Right ventricle myocardium superior (tissue), 1 donor: ENCODE measurements at regions of chr3 and their contacts with region 1.

Region 1: DNA sequence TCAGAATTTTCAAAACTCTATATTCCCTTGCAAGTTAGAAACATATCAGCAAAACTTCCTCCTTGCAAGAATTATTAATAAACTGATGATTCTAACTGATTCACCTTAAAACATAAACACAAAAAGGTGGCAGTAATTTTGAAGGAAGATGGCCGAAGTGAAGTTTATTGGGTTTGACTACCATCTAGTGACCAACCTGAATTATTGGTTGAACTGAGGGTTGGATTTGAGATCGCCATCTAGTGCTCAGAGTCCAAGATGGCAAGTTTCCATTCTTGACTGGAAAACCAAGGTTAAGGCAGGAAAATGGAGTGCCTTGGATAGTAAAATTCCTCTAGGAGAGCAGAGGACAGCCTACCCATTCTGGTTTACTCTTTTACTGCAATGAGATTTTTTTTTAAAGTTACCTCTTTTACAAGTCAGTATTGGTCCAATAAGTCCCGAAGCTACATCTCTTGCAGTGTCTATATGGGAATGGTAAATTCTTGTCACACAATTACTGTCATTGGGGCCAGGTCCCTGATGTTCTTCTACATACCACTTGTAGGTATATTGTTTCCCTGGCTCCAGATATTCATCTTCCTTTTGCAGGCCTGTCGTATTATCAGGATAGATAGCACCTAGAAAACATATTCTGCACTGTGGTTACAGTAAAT is 51.6 kb upstream of the CP start:
- DNase-seq: no peak
- ATAC-seq: peak; percentile 93

Region 2: DNA sequence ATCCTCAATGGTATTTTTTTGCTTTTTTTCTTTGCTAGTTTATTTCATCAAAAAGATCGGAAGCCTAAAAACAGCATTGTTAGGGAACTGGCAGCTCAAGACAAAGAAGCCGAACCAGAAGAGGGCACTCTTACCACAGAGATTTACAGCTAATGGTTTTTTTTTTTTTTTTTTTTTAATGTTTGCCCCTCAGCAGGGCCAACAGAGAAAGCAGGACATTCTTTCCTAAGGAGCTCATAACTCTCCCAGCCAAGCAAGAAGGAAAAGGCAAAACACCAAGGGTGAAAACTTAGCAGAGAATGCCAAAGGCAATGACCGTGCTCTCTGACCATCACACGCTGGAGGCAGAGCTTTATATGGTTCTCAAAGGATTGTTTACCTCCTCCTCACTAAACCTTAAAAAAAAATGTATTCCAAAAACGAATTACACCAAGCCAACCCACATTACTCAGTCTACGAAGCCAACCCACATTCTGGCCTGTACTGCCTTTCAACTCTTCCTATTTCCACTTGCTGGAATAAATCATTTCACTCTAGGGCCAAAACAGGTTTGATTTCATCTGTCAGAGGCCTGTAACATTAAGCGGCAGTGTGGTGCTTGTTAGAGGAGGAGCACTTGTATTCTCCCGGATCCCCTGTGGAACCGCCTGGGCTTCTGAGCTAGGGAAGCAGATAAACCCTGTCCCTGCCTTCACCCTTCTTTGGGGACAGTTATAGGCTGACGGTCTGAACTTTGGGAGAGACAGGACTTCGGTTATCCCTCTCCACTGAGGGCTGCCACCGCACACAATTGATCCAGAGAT is 317.5 kb before region 1 on chr3:
- intact Hi-C with region 1: loop called (anchors 2 kb)
- DNase-seq: no peak
- ATAC-seq: peak; percentile 92

Region 3: DNA sequence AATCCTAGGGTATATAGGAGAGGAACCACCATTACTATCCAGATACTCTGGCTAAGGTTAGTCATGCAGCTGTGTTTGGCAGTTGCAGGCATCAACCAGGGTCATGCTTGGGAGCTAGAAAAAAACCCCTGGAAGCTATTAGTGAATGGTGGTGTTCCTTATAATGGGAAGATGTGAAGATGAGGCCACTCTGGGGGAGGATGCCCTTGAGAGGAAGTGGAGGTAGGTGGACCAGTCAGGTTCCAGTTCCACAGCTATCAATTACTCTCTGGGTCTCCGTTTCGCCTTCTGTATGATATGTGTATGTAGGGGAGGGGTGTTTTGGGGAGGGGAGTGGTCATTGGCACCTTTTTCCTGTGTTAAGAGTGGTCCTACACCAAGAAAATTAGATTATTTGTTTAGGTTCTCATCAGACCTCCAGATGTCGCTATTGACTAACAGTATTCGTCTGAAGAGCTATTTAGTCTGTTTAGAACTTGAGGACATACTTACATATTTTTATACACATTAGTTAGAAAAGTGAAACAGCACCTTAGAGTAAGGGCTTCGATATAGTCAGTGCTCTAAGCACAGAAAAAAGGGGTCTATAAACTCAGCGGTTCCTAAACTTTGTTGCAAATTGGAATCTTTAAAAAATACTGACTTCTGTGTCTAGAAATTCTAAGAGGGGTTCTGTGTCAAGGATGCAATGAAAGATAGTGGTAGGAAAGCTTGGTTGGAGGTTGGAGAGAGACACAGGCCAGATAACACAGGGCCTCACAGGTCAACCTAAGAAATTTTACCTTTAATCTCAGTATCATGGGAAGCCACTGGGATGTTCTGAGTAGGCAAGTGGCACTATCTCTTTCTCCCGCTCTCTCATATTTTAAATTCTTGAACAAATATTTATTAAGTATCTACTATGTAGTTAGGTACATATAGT is 152.9 kb before region 1 on chr3:
- intact Hi-C with region 1: loop called (anchors 2 kb)
- DNase-seq: no peak
- ATAC-seq: peak; percentile 82